ENCODE measurements at regions of chr10 and their contacts with region 1.

Region 1: DNA sequence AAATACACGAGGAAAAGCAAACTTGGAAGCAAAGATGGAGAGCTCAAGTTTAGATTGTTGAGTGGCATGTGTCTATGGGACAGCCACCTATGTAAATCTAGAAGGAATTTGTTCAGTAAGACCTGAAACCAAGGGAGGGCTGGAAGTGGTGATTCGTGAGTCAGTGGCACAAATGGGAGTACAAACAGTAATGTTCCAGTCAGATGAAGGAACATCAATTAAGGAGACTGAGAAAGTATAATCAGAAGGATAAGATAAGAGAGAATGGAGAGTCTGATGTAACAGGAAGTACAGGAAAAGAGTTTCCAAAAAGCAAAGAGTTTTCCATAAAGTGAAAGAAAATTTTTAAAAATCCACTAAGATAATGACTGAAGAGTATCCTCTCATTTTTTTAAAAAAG is 544.2 kb downstream of the KIF20B start:
- DNase-seq: no peak
- H3K4me3 ChIP-seq: no peak overlapping the region
- H3K27ac ChIP-seq: no peak overlapping the region
- H3K4me1 ChIP-seq: no peaks in the 10 kb centered on the region
- H3K27me3 ChIP-seq: no peaks in the 10 kb centered on the region
- CTCF ChIP-seq: no peak

Region 2: GRCh38 chr10:89921422-89921821 is 324.2 kb before region 1 on chr10:
- CTCF ChIA-PET with region 1: interaction called, 10 read pairs
- dilution Hi-C with region 1: no loop called
- in situ Hi-C with region 1: no loop called
- intact Hi-C with region 1: no loop called
- DNase-seq: peak; percentile 95
- H3K4me3 ChIP-seq: no peak overlapping the region
- H3K27ac ChIP-seq: peak overlapping the region; percentile 81
- H3K4me1 ChIP-seq: peaks cover 72% of the 10 kb centered on the region
- H3K27me3 ChIP-seq: no peaks in the 10 kb centered on the region
- CTCF ChIP-seq: no peak

Region 3: DNA sequence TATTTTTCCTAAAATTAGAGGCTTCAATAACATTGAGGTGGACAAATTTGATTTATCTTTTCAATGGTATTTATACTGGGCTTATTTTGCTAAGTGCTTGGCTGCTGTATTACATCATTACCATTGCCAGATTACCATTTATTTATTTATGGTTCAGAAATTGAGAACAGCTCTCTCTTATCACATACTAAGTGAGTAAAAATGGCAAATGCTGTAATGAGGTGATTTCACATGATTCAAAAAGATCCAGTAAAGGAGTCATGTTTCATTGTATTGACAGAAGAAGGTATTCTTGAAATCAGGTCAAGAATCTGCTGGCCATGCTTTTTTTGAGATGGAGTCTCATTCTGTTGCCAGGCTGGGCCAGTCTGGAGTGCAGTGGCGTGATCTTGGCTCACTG is 221.7 kb before region 1 on chr10:
- CTCF ChIA-PET with region 1: no interaction called
- dilution Hi-C with region 1: no loop called
- in situ Hi-C with region 1: no loop called
- intact Hi-C with region 1: no loop called
- DNase-seq: no peak
- H3K4me3 ChIP-seq: no peak overlapping the region
- H3K27ac ChIP-seq: no peak overlapping the region
- H3K4me1 ChIP-seq: no peaks in the 10 kb centered on the region
- H3K27me3 ChIP-seq: no peaks in the 10 kb centered on the region
- CTCF ChIP-seq: no peak

Region 4: DNA sequence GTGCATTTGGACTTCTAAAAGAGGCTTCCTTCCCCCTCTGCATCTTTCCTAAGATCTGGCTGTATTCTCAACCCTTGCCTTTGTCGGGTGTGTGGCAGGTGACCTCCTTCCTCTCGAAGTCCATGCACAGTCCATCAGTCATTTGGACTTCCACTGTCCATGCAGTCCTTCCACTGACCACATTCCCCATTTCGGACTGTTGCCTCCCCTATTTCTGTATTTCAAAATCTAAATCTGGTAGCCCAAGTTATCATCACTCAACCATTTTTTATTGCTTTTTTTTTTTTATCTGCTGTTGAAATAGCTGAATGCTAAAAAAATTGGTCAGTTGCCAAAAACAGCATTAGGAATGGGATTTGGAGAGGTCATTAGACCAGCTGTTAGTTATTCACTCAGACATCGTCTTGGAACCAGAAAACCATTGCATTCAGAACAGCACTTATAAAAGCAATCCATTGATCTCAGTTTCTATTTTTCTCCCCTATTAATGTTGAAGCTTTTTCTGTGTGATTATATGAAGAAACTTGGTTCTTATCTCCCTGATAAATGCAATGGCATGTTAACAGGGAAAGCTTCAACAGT is 31.4 kb after region 1 on chr10:
- CTCF ChIA-PET with region 1: no interaction called
- dilution Hi-C with region 1: no loop called
- in situ Hi-C with region 1: no loop called
- intact Hi-C with region 1: no loop called
- DNase-seq: no peak
- H3K4me3 ChIP-seq: no peak overlapping the region
- H3K27ac ChIP-seq: no peak overlapping the region
- H3K4me1 ChIP-seq: peaks cover 6% of the 10 kb centered on the region
- H3K27me3 ChIP-seq: no peaks in the 10 kb centered on the region
- CTCF ChIP-seq: no peak